AG04450 (cell line): ENCODE measurements at regions of chr5 and their contacts with region 1.

Region 1: GRCh38 chr5:177516604-177517568 is at the start of gene DDX41:
- DNase-seq: peak; percentile 98
- H3K4me3 ChIP-seq: peak within 1 kb of the TSS; percentile 97
- H3K27ac ChIP-seq: peak within 1 kb of the TSS; percentile 85
- H3K27me3 ChIP-seq: no peaks in the 10 kb centered on the region
- CTCF ChIP-seq: 0 out of 2 replicates have a peak, but pooled peaks have one; percentile 11
- polyA plus RNA-seq, gene DDX41: 71.8 and 96.0 TPM in 2 replicates

Region 2: GRCh38 chr5:177546258-177546741 is 29.4 kb after region 1 on chr5:
- CTCF ChIA-PET with region 1: interaction called, 4 read pairs
- POLR2A ChIA-PET with region 1: interaction called, 13 read pairs
- DNase-seq: peak; percentile 95
- H3K4me3 ChIP-seq: no peak overlapping the region
- H3K27ac ChIP-seq: peak overlapping the region; percentile 97
- H3K27me3 ChIP-seq: no peaks in the 10 kb centered on the region
- CTCF ChIP-seq: peak; percentile 14; the same call in 1 of the 2 replicates

Region 3: GRCh38 chr5:177958696-177959095 is 441.8 kb after region 1 on chr5:
- CTCF ChIA-PET with region 1: no interaction called
- POLR2A ChIA-PET with region 1: no interaction called
- DNase-seq: no peak
- H3K4me3 ChIP-seq: no peak overlapping the region
- H3K27ac ChIP-seq: no peak overlapping the region
- H3K27me3 ChIP-seq: no peaks in the 10 kb centered on the region
- CTCF ChIP-seq: no peak